ENCODE measurements at regions of chr4 and their contacts with region 1.

Region 1: DNA sequence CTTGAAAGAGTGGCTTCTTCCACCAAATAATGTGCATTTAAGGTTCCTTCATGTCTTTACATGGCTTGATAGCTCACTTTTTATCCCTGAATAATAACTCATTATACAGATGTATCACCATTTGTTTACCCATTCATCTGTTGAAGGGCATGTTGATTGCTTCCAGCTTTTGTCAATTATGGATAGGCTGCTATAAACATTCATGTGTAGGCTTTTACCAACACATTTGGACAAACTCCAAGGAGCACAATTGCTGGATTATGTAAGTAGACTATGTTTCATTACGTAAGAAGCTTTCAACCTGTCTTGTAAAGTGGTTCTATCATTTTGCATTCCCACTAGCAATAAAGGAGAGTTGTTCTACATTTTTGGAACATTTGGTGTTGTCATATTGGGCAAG is 2637.0 kb downstream of the PCDH7 start:
- DNase-seq: no peak
- ATAC-seq: no peak

Region 2: GRCh38 chr4:33411182-33411581 is 54.1 kb after region 1 on chr4:
- intact Hi-C with region 1: no loop called
- DNase-seq: no peak
- ATAC-seq: no peak

Region 3: GRCh38 chr4:33421887-33422286 is 64.8 kb after region 1 on chr4:
- intact Hi-C with region 1: loop called (anchors 2 kb)
- DNase-seq: no peak
- ATAC-seq: no peak

Measured in sciatic nerve (tissue), 2 donors.